Naive thymus-derived CD4-positive, alpha-beta T cell (primary cell): ENCODE measurements at regions of chr4 and their contacts with region 1.

Region 1: DNA sequence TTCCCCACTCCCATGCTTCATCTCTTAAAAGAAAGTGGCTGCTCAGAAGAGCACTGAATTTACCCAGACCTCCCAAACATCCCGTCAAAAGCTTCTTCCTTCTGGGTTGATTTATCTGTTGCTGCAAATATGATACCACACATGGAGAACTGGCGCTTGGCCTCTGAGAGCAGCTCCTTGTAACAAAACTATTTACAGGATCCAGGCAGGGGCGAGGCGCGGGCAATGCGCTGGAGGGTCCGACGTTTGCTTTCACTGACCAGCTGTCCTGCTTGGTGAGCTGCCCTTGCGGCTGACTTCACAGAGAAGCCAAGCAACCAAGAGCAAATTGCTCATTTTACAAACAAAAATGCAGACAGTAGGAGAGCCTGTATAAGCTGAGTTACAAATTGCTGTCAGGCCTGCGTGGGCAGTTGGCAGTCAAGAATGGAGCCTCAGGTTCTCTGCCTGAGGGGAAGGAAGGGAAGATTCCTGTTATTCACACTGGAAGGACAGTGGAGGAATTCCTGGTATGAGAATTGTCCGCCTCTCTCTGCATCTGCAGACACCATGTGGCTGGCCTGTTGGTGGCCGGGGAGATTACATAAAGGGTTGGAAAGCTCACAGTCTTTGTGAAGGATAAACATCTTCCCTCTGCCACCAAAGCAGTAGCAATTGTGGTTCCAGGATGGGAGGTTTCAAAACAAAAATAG is 192.2 kb upstream of the LEF1 start:
- DNase-seq: peak in 1 of 9 donors; percentile 9
- ATAC-seq: no peak
- H3K4me3 ChIP-seq: no peak overlapping the region
- H3K4me3 Mint-ChIP-seq: peak overlapping the region; percentile 8 to 82 (median 69)
- H3K27ac ChIP-seq: no peak overlapping the region
- H3K27ac Mint-ChIP-seq: peak overlapping the region; percentile 43 to 96 (median 91)
- H3K4me1 ChIP-seq: peaks cover 15 to 58% of the 10 kb centered on the region in 2 donors
- H3K4me1 Mint-ChIP-seq: peaks cover 34 to 77% (median 74%) of the 10 kb centered on the region in 7 donors
- H3K27me3 ChIP-seq: no peaks in the 10 kb centered on the region
- H3K27me3 Mint-ChIP-seq: peaks cover 0 to 14% (median 0%) of the 10 kb centered on the region in 5 donors

Region 2: GRCh38 chr4:108377021-108377420 is 16.1 kb after region 1 on chr4:
- CTCF ChIA-PET with region 1: interaction called, 3 read pairs
- POLR2A ChIA-PET with region 1: interaction called, 12 read pairs
- intact Hi-C with region 1: no loop called
- DNase-seq: no peak
- ATAC-seq: no peak
- H3K4me3 ChIP-seq: no peak overlapping the region
- H3K4me3 Mint-ChIP-seq: no peak overlapping the region
- H3K27ac ChIP-seq: no peak overlapping the region
- H3K27ac Mint-ChIP-seq: peak overlapping the region in 1 of 9 donors; percentile 9
- H3K4me1 ChIP-seq: peaks cover 4 to 12% of the 10 kb centered on the region in 2 donors
- H3K4me1 Mint-ChIP-seq: peaks cover 10 to 54% (median 21%) of the 10 kb centered on the region in 7 donors
- H3K27me3 ChIP-seq: no peaks in the 10 kb centered on the region
- H3K27me3 Mint-ChIP-seq: peaks cover 0 to 20% (median 0%) of the 10 kb centered on the region in 5 donors